K562 (cell line): ENCODE measurements at regions of chr18 and their contacts with region 1.

Region 1: DNA sequence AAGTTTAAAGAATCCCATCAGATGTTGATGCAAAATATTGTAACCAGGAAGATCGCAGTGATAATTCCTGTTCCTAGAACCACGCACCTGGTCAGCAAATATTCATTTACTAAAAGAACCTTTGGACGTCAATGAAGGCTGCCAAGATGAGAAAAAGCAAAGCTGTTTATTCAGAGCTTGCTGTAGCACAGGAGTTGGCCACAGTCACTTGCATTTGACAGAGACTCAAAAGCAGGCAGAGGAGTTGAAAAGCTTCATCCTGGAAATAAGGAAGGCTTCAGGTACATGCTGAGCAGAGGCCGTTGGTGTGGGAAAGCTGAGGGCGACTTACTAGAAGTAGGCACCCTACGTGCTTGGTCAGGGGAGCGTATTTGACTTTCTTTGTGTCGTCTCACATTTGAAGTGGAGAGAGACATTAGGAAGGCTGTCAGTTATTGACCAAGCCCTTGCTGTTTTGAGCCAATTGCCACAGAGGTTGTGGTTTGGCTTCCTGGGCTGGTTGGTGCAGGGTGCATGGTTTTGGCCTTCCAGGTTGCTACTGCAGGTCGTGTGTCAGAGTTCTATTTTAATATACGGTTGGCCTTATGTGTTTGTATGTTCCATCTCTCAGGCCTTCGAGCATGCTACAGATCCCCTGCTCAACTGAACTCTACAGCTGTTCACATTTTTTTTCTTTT is 289.6 kb downstream of the METTL4 start:
- DNase-seq: no peak
- ATAC-seq: no peak
- H3K4me3 ChIP-seq: no peak overlapping the region
- H3K27ac ChIP-seq: no peak overlapping the region
- H3K4me1 ChIP-seq: no peaks in the 10 kb centered on the region; a peak in 1 of 5 replicates
- H3K27me3 ChIP-seq: no peaks in the 10 kb centered on the region
- CTCF ChIP-seq: no peak
- EP300 ChIP-seq: no peak
- POLR2A ChIP-seq: no peak
- RAD21 ChIP-seq: no peak

Region 2: GRCh38 chr18:2293109-2293839 is 11.6 kb after region 1 on chr18:
- CTCF ChIA-PET with region 1: no interaction called
- POLR2A ChIA-PET with region 1: interaction called, 11 read pairs
- in situ Hi-C with region 1: no loop called
- intact Hi-C with region 1: no loop called
- DNase-seq: no peak
- ATAC-seq: peak; percentile 32
- H3K4me3 ChIP-seq: no peak overlapping the region
- H3K27ac ChIP-seq: no peak overlapping the region
- H3K4me1 ChIP-seq: no peaks in the 10 kb centered on the region
- H3K27me3 ChIP-seq: no peaks in the 10 kb centered on the region
- CTCF ChIP-seq: peak in 2 of 3 experiments; percentile 18 to 22; a peak in 3 of 6 replicates
- EP300 ChIP-seq: no peak
- POLR2A ChIP-seq: no peak
- RAD21 ChIP-seq: peak in 1 of 2 experiments; percentile 9; a peak in 1 of 4 replicates